ENCODE measurements at regions of chr17 and their contacts with region 1.

Region 1: GRCh38 chr17:17591355-17592298 is at the start of gene PEMT:
- DNase-seq: peak; percentile 98
- H3K4me3 ChIP-seq: peak within 1 kb of the TSS; percentile 81
- CTCF ChIP-seq: no peak

Region 2: DNA sequence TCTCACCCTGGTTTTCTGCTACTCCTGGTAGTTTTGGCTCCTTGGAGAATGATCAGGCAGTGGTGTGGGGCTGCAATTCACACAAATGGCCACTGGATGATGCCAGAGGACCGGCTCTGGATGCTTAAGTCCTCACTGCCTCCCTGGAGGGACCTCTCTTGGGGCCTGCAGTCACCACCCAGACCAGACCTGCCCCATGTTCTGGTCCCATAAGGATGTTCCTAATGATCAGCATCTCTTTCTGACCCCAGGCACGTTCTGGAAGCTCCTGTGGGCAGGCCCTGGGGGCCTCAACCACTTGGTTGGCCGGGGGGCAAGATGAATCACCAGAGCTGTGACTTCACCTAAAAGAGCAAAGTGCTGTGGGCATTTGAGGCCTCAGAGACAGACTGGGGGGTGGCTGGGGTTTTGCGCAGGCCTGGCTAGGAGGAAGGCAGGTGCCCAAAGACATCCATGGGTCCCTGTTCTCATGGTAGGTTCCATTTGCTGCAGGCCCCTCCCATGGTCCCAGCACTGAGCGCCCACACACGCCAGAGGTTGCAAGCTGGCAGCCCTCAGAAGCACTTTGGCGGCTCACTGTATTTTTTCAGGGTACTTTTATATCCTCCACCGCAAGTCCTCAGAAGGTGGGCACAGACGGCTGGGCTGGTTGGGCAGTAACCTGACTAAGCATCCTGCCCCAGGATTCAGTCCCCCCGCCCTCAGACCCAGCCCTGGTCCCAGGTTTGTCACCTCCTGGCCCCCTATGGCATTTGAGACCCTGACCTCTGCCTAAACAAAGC is 235.3 kb before region 1 on chr17:
- in situ Hi-C with region 1: loop called (anchors 25 kb)
- DNase-seq: peak; percentile 78
- H3K4me3 ChIP-seq: no peak overlapping the region
- CTCF ChIP-seq: peak; percentile 100

Region 3: DNA sequence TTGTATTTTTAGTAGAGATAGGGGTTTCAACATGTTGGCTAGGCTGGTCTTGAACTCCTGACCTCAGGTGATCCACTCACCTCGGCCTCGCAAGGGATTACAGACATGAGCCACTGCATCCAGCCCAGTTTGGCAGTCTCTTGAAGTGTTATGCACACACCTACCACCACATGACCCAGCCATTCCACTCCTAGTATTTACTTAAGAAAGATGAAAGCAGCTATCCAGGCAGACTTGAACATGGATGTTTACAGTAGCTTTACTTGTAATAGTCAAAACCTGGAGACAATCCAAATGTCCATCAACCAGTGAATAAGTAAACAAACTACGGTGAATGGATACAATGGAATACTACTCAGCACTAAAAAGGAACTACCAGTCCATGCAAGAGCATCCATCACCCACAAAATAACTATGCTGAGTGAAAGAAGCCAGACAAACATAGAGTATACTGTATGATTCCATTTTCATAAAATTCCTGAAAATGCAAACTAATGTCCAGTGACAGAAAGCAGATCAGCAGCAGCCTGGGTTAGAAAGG is 57.7 kb before region 1 on chr17:
- in situ Hi-C with region 1: loop called (anchors 5 kb)
- DNase-seq: no peak
- H3K4me3 ChIP-seq: no peak overlapping the region
- CTCF ChIP-seq: no peak

Region 4: GRCh38 chr17:17545031-17545820 is 46.4 kb before region 1 on chr17:
- in situ Hi-C with region 1: no loop called
- DNase-seq: peak; percentile 66
- H3K4me3 ChIP-seq: no peak overlapping the region
- CTCF ChIP-seq: no peak

Region 5: GRCh38 chr17:17624741-17625140 is 33.1 kb after region 1 on chr17:
- in situ Hi-C with region 1: loop called (anchors 5 kb)
- DNase-seq: no peak
- H3K4me3 ChIP-seq: no peak overlapping the region
- CTCF ChIP-seq: no peak